ENCODE measurements at regions of chr7 and their contacts with region 1.

Region 1: DNA sequence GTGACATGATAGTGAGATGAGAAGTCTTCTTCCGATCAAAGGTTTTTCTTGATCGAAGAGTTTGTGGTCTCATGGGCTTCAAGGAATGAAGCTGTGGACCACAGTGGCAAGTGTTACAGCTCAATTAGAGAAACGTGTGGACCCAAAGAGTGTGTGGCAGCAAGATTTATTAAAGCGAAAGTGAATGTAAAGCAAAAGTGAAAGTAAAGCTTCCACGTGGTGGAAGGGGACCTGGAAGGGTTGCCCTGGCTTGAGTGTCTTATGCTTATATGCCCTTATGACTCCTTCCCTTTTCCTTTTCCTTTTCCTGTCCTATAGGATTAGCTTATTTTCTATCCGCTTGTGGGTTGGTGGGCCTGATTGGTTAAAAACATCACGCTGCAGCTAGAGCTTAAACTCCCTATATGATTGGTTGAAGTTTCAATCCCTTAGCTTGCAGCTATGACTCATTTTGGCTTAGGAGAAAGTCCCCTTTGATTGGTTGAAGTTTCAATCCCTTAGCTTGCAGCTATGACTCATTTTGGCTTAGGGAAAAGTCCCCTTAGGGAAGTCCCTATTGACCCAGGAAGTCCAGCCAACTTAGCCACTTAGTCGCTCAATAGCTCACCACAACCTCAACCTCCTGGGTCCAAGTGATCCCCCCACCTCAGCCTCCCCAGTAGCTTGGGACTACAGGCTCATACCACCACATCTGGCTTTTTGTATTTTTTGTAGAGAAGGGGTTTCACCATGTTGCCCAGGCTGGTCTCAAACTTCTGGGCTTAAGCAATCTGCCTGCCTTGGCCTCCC is 34.7 kb downstream of the MRPS24 start:
- DNase-seq: peak; percentile 59 to 68 (median 64)
- H3K4me3 ChIP-seq: peak overlapping the region; percentile 45 to 58
- H3K4me3 Mint-ChIP-seq: peak overlapping the region; percentile 89 to 98 (median 96)
- H3K27ac ChIP-seq: peak overlapping the region; percentile 60
- H3K27ac Mint-ChIP-seq: peak overlapping the region; percentile 85 to 99 (median 96)
- H3K4me1 ChIP-seq: peaks cover 14% of the 10 kb centered on the region
- H3K4me1 Mint-ChIP-seq: peaks cover 16 to 25% (median 21%) of the 10 kb centered on the region in 4 donors
- H3K27me3 ChIP-seq: no peaks in the 10 kb centered on the region
- H3K27me3 Mint-ChIP-seq: no peaks in the 10 kb centered on the region

Region 2: GRCh38 chr7:42931834-42932651 is 902.6 kb before region 1 on chr7 and contains the starts of genes MRPL32 and PSMA2:
- CTCF ChIA-PET with region 1: interaction called, 6 read pairs
- POLR2A ChIA-PET with region 1: interaction called, 7 read pairs
- intact Hi-C with region 1: loop called (anchors 2 kb)
- DNase-seq: peak; percentile 94 to 98 (median 96)
- H3K4me3 ChIP-seq: peak within 1 kb of the TSS; percentile 93 to 96
- H3K4me3 Mint-ChIP-seq: peak within 1 kb of the TSS; percentile 93 to 100 (median 99)
- H3K27ac ChIP-seq: peak within 1 kb of the TSS; percentile 94
- H3K27ac Mint-ChIP-seq: peak within 1 kb of the TSS; percentile 90 to 100 (median 99)
- H3K4me1 ChIP-seq: peaks cover 50% of the 10 kb centered on the region
- H3K4me1 Mint-ChIP-seq: peaks cover 44 to 85% (median 58%) of the 10 kb centered on the region in 4 donors
- H3K27me3 ChIP-seq: no peaks in the 10 kb centered on the region
- H3K27me3 Mint-ChIP-seq: no peaks in the 10 kb centered on the region
- total RNA-seq, gene MRPL32: 48.4 to 49.1 TPM
- total RNA-seq, gene PSMA2: 35.6 to 43.5 TPM

Region 3: DNA sequence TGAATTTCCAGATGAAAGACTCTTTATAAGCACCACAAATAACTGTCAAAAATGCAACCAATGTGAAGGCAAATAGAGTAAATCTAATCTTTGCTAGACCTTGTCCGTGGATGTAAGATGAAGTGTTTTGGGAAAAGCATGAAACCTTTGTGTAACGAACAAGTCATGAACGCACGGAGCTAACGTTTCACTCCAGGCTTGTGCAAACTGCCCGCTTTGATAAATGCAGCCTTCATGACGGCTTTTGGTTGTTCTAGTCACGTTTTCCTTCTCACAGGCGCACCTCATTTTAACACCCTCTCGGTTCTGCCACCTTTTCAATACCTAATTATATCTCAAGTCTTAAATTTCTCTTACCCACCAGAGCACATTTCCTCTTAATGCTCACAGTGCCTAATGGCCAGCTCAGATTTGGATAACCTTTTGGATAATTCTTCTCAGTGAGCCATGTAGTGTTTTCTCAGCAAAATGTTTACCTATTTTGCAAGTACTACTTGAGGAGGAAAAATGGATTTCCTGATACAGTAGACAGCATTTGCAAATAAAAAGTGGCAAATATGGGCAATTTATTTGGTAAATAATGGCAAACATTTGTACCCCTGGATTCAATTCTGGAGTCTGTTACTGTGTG is 659.0 kb before region 1 on chr7:
- CTCF ChIA-PET with region 1: no interaction called
- POLR2A ChIA-PET with region 1: no interaction called
- intact Hi-C with region 1: loop called (anchors 5 kb)
- DNase-seq: no peak
- H3K4me3 ChIP-seq: no peak overlapping the region
- H3K4me3 Mint-ChIP-seq: no peak overlapping the region
- H3K27ac ChIP-seq: no peak overlapping the region
- H3K27ac Mint-ChIP-seq: no peak overlapping the region
- H3K4me1 ChIP-seq: no peaks in the 10 kb centered on the region
- H3K4me1 Mint-ChIP-seq: no peaks in the 10 kb centered on the region
- H3K27me3 ChIP-seq: no peaks in the 10 kb centered on the region
- H3K27me3 Mint-ChIP-seq: peaks cover 4 to 10% of the 10 kb centered on the region in 2 donors

Region 4: GRCh38 chr7:43630482-43630881 is 204.2 kb before region 1 on chr7:
- CTCF ChIA-PET with region 1: interaction called, 4 read pairs
- POLR2A ChIA-PET with region 1: no interaction called
- intact Hi-C with region 1: loop called (anchors 1 kb)
- DNase-seq: no peak
- H3K4me3 ChIP-seq: no peak overlapping the region
- H3K4me3 Mint-ChIP-seq: peak overlapping the region in 4 of 8 donors; percentile 4 to 54 (median 20)
- H3K27ac ChIP-seq: no peak overlapping the region
- H3K27ac Mint-ChIP-seq: peak overlapping the region; percentile 64 to 95 (median 82)
- H3K4me1 ChIP-seq: peaks cover 93% of the 10 kb centered on the region
- H3K4me1 Mint-ChIP-seq: peaks cover 46 to 94% (median 67%) of the 10 kb centered on the region in 4 donors
- H3K27me3 ChIP-seq: no peaks in the 10 kb centered on the region
- H3K27me3 Mint-ChIP-seq: no peaks in the 10 kb centered on the region

Region 5: DNA sequence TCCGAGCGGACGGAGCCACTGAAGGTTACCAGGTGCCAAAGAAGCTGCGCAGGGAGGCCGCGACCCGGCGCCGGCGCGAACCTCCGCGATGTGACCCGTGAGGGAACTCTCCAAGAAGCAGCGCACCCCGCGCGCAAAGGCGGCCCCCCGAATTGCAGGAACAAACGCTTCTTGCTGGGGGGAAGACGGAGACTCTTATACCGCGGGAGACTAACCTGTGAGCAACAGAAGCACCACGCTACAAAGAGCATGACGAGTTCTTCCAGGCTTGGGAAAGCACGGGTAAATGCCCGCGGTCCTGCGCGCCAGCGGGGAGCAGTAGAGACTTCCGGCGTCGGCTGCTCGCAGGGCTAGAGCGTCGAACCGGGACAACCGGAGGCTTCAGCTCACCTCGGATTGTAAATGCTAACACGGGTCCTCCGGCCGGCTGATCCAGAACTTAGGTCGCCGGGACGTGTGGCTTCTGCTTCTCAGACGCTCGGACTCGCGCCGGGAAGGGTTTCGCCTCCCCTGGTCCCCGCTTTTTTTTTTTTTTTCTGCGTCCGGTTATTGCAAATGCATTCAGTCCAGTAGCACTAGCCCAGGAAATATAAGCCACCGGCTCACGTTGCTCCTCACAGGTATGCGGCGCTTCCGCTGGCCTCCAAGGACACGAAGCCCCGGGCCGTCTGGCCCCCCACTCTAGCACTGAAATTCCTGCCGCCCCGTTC is 105.3 kb before region 1 on chr7 and contains the start of gene COA1:
- CTCF ChIA-PET with region 1: interaction called, 19 read pairs
- POLR2A ChIA-PET with region 1: interaction called, 12 read pairs
- intact Hi-C with region 1: loop called (anchors 1 kb)
- DNase-seq: peak; percentile 82 to 84 (median 83)
- H3K4me3 ChIP-seq: peak within 1 kb of the TSS; percentile 97 to 99
- H3K4me3 Mint-ChIP-seq: peak within 1 kb of the TSS; percentile 93 to 95 (median 94)
- H3K27ac ChIP-seq: peak within 1 kb of the TSS; percentile 67
- H3K27ac Mint-ChIP-seq: peak within 1 kb of the TSS; percentile 84 to 95 (median 91)
- H3K4me1 ChIP-seq: peaks cover 34% of the 10 kb centered on the region
- H3K4me1 Mint-ChIP-seq: peaks cover 27 to 43% (median 35%) of the 10 kb centered on the region in 4 donors
- H3K27me3 ChIP-seq: no peaks in the 10 kb centered on the region
- H3K27me3 Mint-ChIP-seq: no peaks in the 10 kb centered on the region
- total RNA-seq, gene COA1: 52.0 to 53.2 TPM

Region 6: DNA sequence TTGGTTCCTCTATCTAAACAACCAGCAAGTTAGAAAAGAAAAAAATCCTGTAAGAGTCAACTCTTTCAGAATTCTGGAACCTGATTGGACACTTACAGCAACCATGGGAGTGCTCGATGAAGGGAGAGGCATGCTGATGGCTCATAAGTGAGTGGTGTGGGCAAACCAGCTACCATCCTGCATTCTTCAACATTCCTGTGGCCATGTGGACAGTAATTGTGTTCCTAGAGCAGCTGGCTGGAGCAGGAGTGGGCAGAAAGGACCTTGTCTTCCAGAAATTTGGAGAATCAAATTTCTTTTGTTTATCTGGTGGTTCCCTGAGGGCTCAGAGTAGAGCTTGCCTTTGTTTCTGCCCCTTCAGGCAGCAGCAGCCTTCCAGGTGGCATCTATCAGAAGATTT is 328.9 kb after region 1 on chr7:
- CTCF ChIA-PET with region 1: no interaction called
- POLR2A ChIA-PET with region 1: no interaction called
- intact Hi-C with region 1: no loop called
- DNase-seq: no peak
- H3K4me3 ChIP-seq: no peak overlapping the region
- H3K4me3 Mint-ChIP-seq: no peak overlapping the region
- H3K27ac ChIP-seq: no peak overlapping the region
- H3K27ac Mint-ChIP-seq: no peak overlapping the region
- H3K4me1 ChIP-seq: no peaks in the 10 kb centered on the region
- H3K4me1 Mint-ChIP-seq: peaks cover 0 to 7% (median 3%) of the 10 kb centered on the region in 4 donors
- H3K27me3 ChIP-seq: no peaks in the 10 kb centered on the region
- H3K27me3 Mint-ChIP-seq: peaks cover 3 to 5% of the 10 kb centered on the region in 2 donors

Region 7: GRCh38 chr7:44811086-44811485 is 976.4 kb after region 1 on chr7:
- CTCF ChIA-PET with region 1: no interaction called
- POLR2A ChIA-PET with region 1: no interaction called
- intact Hi-C with region 1: no loop called
- DNase-seq: no peak
- H3K4me3 ChIP-seq: no peak overlapping the region
- H3K4me3 Mint-ChIP-seq: no peak overlapping the region
- H3K27ac ChIP-seq: no peak overlapping the region
- H3K27ac Mint-ChIP-seq: no peak overlapping the region
- H3K4me1 ChIP-seq: no peaks in the 10 kb centered on the region
- H3K4me1 Mint-ChIP-seq: peaks cover 0 to 4% (median 0%) of the 10 kb centered on the region in 4 donors
- H3K27me3 ChIP-seq: no peaks in the 10 kb centered on the region
- H3K27me3 Mint-ChIP-seq: no peaks in the 10 kb centered on the region

Measured in CD4-positive, alpha-beta memory T cell (primary cell).